ENCODE measurements at regions of chr2 and their contacts with region 1.

Region 1: GRCh38 chr2:208175069-208175839 is 11.9 kb upstream of the CRYGA start:
- DNase-seq: peak; percentile 36 to 82
- H3K4me3 ChIP-seq: no peak overlapping the region
- H3K27ac ChIP-seq: no peak overlapping the region
- H3K4me1 ChIP-seq: peaks cover 0 to 2% (median 2%) of the 10 kb centered on the region in 4 experiments; a peak in 2 of 7 replicates
- H3K27me3 ChIP-seq: no peaks in the 10 kb centered on the region
- CTCF ChIP-seq: peak; percentile 81 to 91 (median 87)
- EP300 ChIP-seq: no peak
- POLR2A ChIP-seq: no peak
- RAD21 ChIP-seq: peak; percentile 81 to 86

Region 2: DNA sequence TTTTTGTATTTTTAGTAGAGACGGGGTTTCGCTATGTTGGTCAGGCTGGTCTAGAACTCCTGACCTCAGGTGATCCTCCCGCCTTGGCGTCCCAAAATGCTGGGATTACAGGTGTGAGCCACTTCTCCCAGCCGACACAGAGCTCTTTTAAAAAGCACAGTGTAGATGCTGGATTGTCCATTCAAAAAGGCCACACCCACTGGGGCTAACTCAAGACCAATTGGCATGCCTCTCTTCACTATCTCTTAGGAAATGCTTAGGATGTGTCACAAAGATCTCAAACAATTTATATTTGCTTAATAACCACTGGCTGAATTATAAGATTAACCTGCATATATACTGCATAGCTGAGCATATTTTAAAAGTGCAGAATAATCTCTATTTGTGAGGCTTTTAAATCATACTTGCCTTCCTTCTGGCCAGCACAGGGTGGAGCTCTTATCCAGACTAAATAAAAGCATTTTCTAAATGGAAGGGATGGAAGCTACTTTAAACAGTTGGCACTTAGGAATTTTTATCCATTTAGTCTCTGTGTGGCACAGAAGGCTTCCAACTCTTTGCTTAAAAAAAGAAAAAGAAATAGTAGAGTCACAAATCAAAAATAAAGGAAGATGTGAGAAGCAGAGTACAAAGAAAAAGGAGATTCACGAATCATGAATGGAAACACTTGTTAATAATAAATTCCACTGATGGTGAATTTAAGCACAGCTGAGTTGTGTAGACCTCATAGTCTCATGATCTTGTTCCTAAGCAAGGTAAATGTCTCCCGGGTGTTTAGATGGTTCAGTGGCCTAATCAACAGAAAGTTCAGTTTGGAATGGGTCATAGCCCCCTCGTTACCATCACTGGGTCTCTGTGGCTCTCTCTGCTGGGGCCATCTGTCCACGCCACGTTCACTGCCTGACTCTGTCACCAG is 73.3 kb before region 1 on chr2:
- CTCF ChIA-PET with region 1: interaction called, 38 read pairs
- POLR2A ChIA-PET with region 1: interaction called, 3 read pairs
- DNase-seq: peak in 1 of 2 experiments; percentile 42
- H3K4me3 ChIP-seq: no peak overlapping the region
- H3K27ac ChIP-seq: no peak overlapping the region
- H3K4me1 ChIP-seq: peaks cover 2 to 6% (median 2%) of the 10 kb centered on the region in 4 experiments; a peak in 4 of 7 replicates
- H3K27me3 ChIP-seq: no peaks in the 10 kb centered on the region; a peak in 1 of 7 replicates
- CTCF ChIP-seq: peak in 2 of 3 experiments; percentile 53 to 59; a peak in 2 of 4 replicates
- EP300 ChIP-seq: no peak
- POLR2A ChIP-seq: no peak
- RAD21 ChIP-seq: peak; percentile 83 to 84

Region 3: GRCh38 chr2:208142240-208142924 is 32.9 kb before region 1 on chr2:
- CTCF ChIA-PET with region 1: interaction called, 56 read pairs
- POLR2A ChIA-PET with region 1: no interaction called
- DNase-seq: no peak
- H3K4me3 ChIP-seq: no peak overlapping the region
- H3K27ac ChIP-seq: no peak overlapping the region
- H3K4me1 ChIP-seq: 0 out of 7 replicates have a peak, but pooled peaks cover 0 to 3% (median 0%) of the 10 kb centered on the region in 4 experiments
- H3K27me3 ChIP-seq: no peaks in the 10 kb centered on the region; a peak in 1 of 7 replicates
- CTCF ChIP-seq: no peak
- EP300 ChIP-seq: no peak
- POLR2A ChIP-seq: no peak
- RAD21 ChIP-seq: no peak

Region 4: GRCh38 chr2:208164951-208165755 is 10.1 kb before region 1 on chr2:
- CTCF ChIA-PET with region 1: interaction called, 30 read pairs
- POLR2A ChIA-PET with region 1: no interaction called
- DNase-seq: no peak
- H3K4me3 ChIP-seq: no peak overlapping the region
- H3K27ac ChIP-seq: no peak overlapping the region
- H3K4me1 ChIP-seq: no peaks in the 10 kb centered on the region
- H3K27me3 ChIP-seq: no peaks in the 10 kb centered on the region
- CTCF ChIP-seq: no peak
- EP300 ChIP-seq: no peak
- POLR2A ChIP-seq: no peak
- RAD21 ChIP-seq: no peak

Region 5: GRCh38 chr2:208208335-208209085 is 33.3 kb after region 1 on chr2:
- CTCF ChIA-PET with region 1: interaction called, 20 read pairs
- POLR2A ChIA-PET with region 1: interaction called, 6 read pairs
- DNase-seq: no peak
- H3K4me3 ChIP-seq: no peak overlapping the region
- H3K27ac ChIP-seq: no peak overlapping the region
- H3K4me1 ChIP-seq: no peaks in the 10 kb centered on the region
- H3K27me3 ChIP-seq: no peaks in the 10 kb centered on the region
- CTCF ChIP-seq: no peak
- EP300 ChIP-seq: no peak
- POLR2A ChIP-seq: no peak
- RAD21 ChIP-seq: no peak

Region 6: DNA sequence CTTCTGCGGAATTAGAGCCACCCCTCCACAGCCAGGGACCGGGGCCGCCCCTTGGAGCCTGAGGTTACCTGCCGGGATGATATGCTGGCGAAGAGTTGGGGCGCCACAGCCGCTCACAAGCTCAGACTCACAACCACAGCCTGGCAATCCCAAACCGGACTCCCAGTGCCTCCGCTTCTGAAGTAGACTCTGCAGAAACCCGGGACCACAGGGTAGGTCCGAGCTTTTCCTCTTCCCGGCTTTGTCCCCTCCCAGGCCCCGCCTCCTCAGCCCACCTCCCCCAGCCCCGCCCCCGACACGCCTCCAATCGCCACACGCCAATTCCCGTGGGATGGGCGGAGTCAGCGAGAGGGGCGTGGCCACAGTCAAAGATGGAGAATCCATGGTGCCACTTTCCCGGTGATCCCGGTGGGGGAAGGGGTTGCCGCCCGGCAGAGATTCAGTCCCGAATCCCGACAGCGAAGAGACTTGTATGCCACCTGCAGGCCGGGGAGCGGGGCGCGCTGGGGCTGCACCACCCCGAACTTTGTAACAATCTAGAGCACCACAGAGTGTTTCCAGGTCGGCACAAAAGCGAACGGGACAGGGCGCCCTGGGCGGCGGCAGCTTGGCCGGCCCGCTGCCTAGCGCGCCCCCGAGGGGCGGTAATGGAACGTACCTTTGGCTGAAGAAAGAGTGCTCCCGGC is 79.8 kb after region 1 on chr2 and contains the start of gene IDH1:
- CTCF ChIA-PET with region 1: interaction called, 53 read pairs
- POLR2A ChIA-PET with region 1: interaction called, 17 read pairs
- DNase-seq: peak; percentile 83 to 100
- H3K4me3 ChIP-seq: peak within 1 kb of the TSS; percentile 85 to 100 (median 99)
- H3K27ac ChIP-seq: peak within 1 kb of the TSS; percentile 82
- H3K4me1 ChIP-seq: peaks cover 0 to 5% (median 3%) of the 10 kb centered on the region in 4 experiments; a peak in 2 of 7 replicates
- H3K27me3 ChIP-seq: no peaks in the 10 kb centered on the region
- CTCF ChIP-seq: peak; percentile 50 to 57 (median 52); a peak in 3 of 4 replicates
- EP300 ChIP-seq: no peak
- POLR2A ChIP-seq: peak; percentile 38 to 62; a peak in 2 of 3 replicates
- RAD21 ChIP-seq: peak; percentile 46 to 48
- total RNA-seq, gene IDH1: 379 and 398 TPM in 2 replicates